ENCODE measurements at regions of chr6 and their contacts with region 1.

Region 1: GRCh38 chr6:13574149-13574570 is 241 bp upstream of the SIRT5 start:
- H3K4me3 ChIP-seq: peak overlapping the region; percentile 86
- H3K27ac ChIP-seq: peak overlapping the region; percentile 93
- H3K4me1 ChIP-seq: 0 out of 2 replicates have a peak, but pooled peaks cover 3% of the 10 kb centered on the region
- CTCF ChIP-seq: no peak

Region 2: GRCh38 chr6:13328076-13328874 is 245.9 kb before region 1 on chr6 and contains the start of gene TBC1D7:
- CTCF ChIA-PET with region 1: interaction called, 18 read pairs
- POLR2A ChIA-PET with region 1: interaction called, 11 read pairs
- H3K4me3 ChIP-seq: peak within 1 kb of the TSS; percentile 97
- H3K27ac ChIP-seq: peak within 1 kb of the TSS; percentile 83
- H3K4me1 ChIP-seq: peaks cover 3% of the 10 kb centered on the region; the same call in 1 of the 2 replicates
- CTCF ChIP-seq: peak; percentile 40; the same call in 1 of the 2 replicates

Region 3: GRCh38 chr6:13383328-13384163 is 190.6 kb before region 1 on chr6:
- CTCF ChIA-PET with region 1: interaction called, 10 read pairs
- POLR2A ChIA-PET with region 1: interaction called, 3 read pairs
- H3K4me3 ChIP-seq: no peak overlapping the region
- H3K27ac ChIP-seq: no peak overlapping the region
- H3K4me1 ChIP-seq: peaks cover 4% of the 10 kb centered on the region; the same call in 1 of the 2 replicates
- CTCF ChIP-seq: no peak

Region 4: GRCh38 chr6:13454286-13455221 is 119.6 kb before region 1 on chr6:
- CTCF ChIA-PET with region 1: interaction called, 12 read pairs
- POLR2A ChIA-PET with region 1: interaction called, 3 read pairs
- H3K4me3 ChIP-seq: no peak overlapping the region
- H3K27ac ChIP-seq: no peak overlapping the region
- H3K4me1 ChIP-seq: peaks cover 3% of the 10 kb centered on the region; the same call in 1 of the 2 replicates
- CTCF ChIP-seq: peak; percentile 31; the same call in 1 of the 2 replicates

Region 5: DNA sequence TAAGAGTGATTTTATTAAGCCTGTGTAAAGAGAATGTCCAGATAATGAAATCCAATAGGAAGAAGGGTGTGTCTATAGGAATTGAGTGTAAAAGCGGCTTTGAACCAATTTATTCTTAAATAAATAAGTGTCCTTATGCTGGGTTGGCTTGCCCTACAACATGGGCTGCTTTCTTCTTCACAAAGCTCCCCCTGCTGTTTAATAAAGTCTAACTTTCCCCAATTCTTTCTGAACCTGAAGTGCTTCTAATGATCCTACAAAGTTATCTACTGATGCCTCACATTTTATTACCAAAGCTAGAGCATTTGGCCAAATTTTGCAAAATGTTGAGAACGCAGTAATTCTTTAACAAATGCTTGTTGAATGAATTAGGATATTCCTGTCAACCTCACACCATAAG is 36.1 kb before region 1 on chr6:
- CTCF ChIA-PET with region 1: interaction called, 19 read pairs
- POLR2A ChIA-PET with region 1: interaction called, 7 read pairs
- H3K4me3 ChIP-seq: no peak overlapping the region
- H3K27ac ChIP-seq: no peak overlapping the region
- H3K4me1 ChIP-seq: no peaks in the 10 kb centered on the region
- CTCF ChIP-seq: no peak

Region 6: GRCh38 chr6:13586603-13587542 is 12.7 kb after region 1 on chr6:
- CTCF ChIA-PET with region 1: interaction called, 32 read pairs
- POLR2A ChIA-PET with region 1: interaction called, 5 read pairs
- H3K4me3 ChIP-seq: no peak overlapping the region
- H3K27ac ChIP-seq: no peak overlapping the region
- H3K4me1 ChIP-seq: no peaks in the 10 kb centered on the region
- CTCF ChIP-seq: no peak

Region 7: GRCh38 chr6:13614926-13615798 is 41.0 kb after region 1 on chr6 and contains the start of gene NOL7:
- CTCF ChIA-PET with region 1: interaction called, 39 read pairs
- POLR2A ChIA-PET with region 1: interaction called, 49 read pairs
- H3K4me3 ChIP-seq: peak within 1 kb of the TSS; percentile 73
- H3K27ac ChIP-seq: peak within 1 kb of the TSS; percentile 60
- H3K4me1 ChIP-seq: peaks cover 12% of the 10 kb centered on the region
- CTCF ChIP-seq: peak; percentile 100

Region 8: DNA sequence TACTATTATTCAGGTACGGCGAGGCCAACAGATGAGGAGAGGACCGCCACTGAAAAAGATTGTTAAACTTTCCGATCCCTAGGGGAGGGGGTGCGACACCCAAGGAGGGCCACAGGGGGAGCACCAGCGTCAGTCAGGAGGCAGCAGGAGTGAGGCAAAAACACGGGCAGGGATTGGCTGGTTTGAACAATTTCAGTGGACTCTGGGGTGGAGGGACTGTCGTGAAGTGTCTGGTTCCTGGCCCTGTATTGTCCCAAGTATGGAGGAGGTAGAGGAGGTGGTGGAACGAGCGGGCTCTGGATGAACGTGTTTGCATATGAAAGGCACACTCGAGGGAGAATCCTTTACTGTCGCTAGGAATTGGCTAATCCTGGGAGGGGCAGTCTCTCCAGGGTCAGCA is 272.7 kb after region 1 on chr6:
- CTCF ChIA-PET with region 1: no interaction called
- POLR2A ChIA-PET with region 1: no interaction called
- H3K4me3 ChIP-seq: no peak overlapping the region
- H3K27ac ChIP-seq: no peak overlapping the region
- H3K4me1 ChIP-seq: no peaks in the 10 kb centered on the region
- CTCF ChIP-seq: no peak

Measured in HEK293 (cell line).